Endothelial cell of umbilical vein (primary cell): ENCODE measurements at regions of chr2 and their contacts with region 1.

Region 1: DNA sequence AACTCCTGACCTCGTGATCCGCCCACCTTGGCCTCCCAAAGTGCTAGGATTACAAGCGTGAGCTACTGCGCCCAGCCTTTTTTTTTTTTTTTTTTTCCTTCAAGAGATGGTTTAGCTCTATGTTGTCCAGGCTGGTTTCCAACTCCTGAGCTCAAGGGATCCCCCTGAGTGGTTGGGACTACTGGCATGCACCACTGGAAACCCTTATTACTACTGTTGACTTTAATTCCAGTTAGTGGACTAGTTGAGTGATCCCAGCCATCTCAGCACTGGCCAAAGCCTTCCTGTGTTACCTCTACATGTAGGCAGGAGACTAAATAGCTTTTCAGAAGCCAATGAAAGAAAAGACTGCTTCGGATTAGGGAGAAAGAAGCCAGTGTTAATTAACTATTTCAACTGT is 8.1 kb upstream of the SSB start:
- DNase-seq: no peak
- H3K4me3 ChIP-seq: no peak overlapping the region
- H3K27ac ChIP-seq: no peak overlapping the region
- H3K4me1 ChIP-seq: peaks cover 3% of the 10 kb centered on the region
- H3K27me3 ChIP-seq: peaks cover 0 to 3% of the 10 kb centered on the region in 2 experiments
- CTCF ChIP-seq: no peak
- POLR2A ChIP-seq: no peak

Region 2: DNA sequence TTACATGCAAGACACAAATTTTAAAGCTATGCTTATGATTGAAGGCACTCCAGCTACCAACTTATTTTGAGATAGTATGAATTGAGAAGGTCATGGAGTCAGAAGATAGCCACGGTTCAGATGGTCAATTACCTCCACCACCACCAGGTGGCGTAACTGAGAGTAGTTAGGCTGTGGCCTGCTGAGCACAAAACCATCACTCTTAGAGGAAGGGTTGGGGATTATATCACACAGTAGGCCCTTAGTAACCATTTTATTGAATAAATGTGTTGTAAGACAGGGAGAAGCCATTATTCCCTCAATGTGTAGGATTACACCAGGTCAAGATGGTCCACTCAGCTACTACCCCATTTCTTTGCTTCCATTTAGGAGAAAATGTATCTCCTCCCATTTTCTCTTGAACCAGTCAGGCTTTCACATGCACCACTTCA is 262.3 kb before region 1 on chr2:
- CTCF ChIA-PET with region 1: interaction called, 7 read pairs
- POLR2A ChIA-PET with region 1: no interaction called
- dilution Hi-C with region 1: no loop called
- intact Hi-C with region 1: loop called (anchors 1 kb)
- DNase-seq: peak; percentile 68
- H3K4me3 ChIP-seq: no peak overlapping the region
- H3K27ac ChIP-seq: no peak overlapping the region
- H3K4me1 ChIP-seq: no peaks in the 10 kb centered on the region
- H3K27me3 ChIP-seq: no peaks in the 10 kb centered on the region
- CTCF ChIP-seq: peak; percentile 76 to 80
- POLR2A ChIP-seq: no peak

Region 3: DNA sequence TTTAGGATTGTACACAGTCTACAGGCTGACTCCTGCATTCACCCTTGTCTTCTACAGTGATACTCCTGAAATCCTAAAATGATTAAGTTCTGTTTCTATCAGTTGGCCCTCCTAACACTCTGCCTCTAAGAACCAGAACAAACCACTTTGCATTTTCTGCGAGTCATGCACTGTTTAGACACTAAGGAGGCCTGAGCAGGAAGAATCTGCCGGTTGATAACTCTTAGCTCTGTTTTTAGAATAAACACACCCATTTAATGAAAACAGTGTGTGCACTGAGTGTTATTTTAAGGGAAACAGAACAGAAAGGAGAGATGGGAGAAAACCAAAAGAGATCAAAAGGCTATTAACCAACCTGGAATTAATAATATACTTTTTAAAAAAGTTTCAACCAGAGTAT is 14.8 kb before region 1 on chr2:
- CTCF ChIA-PET with region 1: interaction called, 15 read pairs
- POLR2A ChIA-PET with region 1: no interaction called
- dilution Hi-C with region 1: no loop called
- intact Hi-C with region 1: no loop called
- DNase-seq: peak; percentile 74
- H3K4me3 ChIP-seq: no peak overlapping the region
- H3K27ac ChIP-seq: no peak overlapping the region
- H3K4me1 ChIP-seq: no peaks in the 10 kb centered on the region
- H3K27me3 ChIP-seq: no peaks in the 10 kb centered on the region
- CTCF ChIP-seq: no peak
- POLR2A ChIP-seq: no peak